Activated CD4-positive, alpha-beta memory T cell treated with anti-CD3 and anti-CD28 coated beads for 36 hours (primary cell): ENCODE measurements at regions of chr12 and their contacts with region 1.

Region 1: GRCh38 chr12:6937481-6938297 is 5.9 kb upstream of the RNU7-1 start:
- DNase-seq: peak; percentile 96
- H3K4me3 Mint-ChIP-seq: peak overlapping the region; percentile 76
- H3K27ac Mint-ChIP-seq: peak overlapping the region; percentile 94
- H3K4me1 Mint-ChIP-seq: peaks cover 44% of the 10 kb centered on the region
- H3K27me3 Mint-ChIP-seq: no peaks in the 10 kb centered on the region

Region 2: DNA sequence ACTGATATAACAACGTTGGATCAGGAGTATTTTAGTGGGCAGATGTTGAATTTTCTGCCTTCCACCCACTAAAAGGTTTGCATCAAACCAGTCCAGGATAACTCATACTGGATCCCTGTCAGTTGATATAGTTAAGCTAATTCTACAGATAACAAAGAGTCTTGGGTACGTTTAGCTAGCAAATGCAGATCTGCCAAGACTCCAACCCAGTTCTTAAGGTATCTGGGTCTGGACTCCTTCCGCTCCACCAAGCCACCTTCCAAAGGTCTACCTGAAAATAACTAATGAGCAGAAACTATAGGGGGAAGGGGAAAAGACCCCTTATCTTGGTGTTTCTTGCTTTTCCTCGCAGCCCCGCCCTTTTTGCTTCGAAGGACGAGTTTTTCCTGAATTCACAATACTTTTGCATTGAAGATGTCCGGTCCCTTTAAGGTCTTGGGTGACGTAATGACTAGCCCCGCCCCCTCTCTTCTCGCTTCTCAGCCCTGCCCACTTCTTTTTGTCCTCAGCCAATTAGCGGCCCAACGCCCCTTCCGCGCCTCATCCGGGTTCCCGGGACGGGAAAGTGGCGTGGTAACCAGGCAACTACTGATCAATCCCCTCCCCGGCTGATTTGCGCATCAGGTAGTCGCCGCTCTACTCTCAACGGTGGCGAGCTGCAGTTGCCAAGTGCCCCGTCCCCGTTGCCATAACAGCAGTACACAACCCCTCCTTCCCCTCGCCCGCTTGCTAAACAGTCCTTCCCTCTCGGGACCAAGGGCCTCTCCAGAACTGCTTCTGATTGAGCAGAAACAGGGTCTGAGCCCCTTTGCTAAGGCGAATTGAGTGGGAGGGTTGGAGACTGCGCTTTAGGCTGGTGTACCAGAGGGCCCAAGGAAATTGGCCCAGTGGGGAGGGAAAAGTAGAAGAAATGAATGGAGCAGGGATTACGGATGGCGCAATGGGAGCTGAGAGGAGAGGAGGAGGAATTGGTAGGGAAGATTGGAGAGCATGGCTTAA is 33.1 kb before region 1 on chr12 and contains the start of gene LRRC23:
- CTCF ChIA-PET with region 1: interaction called, 5 read pairs
- POLR2A ChIA-PET with region 1: interaction called, 5 read pairs
- intact Hi-C with region 1: loop called (anchors 2 kb)
- DNase-seq: peak; percentile 99
- H3K4me3 Mint-ChIP-seq: no peak within 1 kb of the TSS
- H3K27ac Mint-ChIP-seq: no peak within 1 kb of the TSS
- H3K4me1 Mint-ChIP-seq: peaks cover 5% of the 10 kb centered on the region
- H3K27me3 Mint-ChIP-seq: no peaks in the 10 kb centered on the region
- total RNA-seq, gene LRRC23: 6.8 to 7.8 TPM

Region 3: GRCh38 chr12:6921996-6922946 is 15.4 kb before region 1 on chr12:
- CTCF ChIA-PET with region 1: interaction called, 12 read pairs
- POLR2A ChIA-PET with region 1: interaction called, 33 read pairs
- intact Hi-C with region 1: loop called (anchors 1 kb)
- DNase-seq: no peak
- H3K4me3 Mint-ChIP-seq: no peak overlapping the region
- H3K27ac Mint-ChIP-seq: no peak overlapping the region
- H3K4me1 Mint-ChIP-seq: peaks cover 37% of the 10 kb centered on the region
- H3K27me3 Mint-ChIP-seq: no peaks in the 10 kb centered on the region

Region 4: DNA sequence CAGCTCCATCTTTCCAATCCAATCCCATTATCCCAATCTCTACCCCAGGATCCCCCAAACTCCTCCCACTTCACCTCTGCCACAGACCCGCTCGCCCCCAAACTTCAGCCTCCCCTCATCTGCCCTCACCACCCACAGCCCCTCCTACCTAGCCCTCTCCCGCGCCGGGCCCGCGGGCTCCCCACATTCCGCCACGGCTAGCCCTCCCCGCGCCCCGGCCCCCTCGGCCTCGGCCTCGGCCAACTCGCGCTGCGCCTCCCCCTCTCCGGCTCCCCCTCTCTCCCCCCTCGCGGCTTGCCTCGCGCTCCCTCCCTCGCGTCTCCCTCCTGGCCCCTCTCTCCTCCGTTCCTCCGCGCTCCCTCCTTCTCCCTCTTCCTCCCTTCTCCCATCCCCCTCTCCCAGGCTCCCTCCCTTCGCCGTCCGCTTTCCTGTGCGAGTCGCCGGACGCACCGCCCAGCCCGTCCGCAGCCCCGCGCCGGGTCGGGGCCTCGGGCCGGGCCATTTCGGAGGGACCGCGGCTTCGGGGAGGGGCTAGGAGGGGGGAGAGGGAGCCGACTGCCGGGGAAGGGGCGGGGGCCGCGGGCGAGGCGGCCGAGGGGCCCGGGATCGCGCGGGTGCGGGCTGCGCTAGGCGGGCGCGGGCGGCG is 10.2 kb before region 1 on chr12 and contains the start of gene ATN1:
- CTCF ChIA-PET with region 1: interaction called, 12 read pairs
- POLR2A ChIA-PET with region 1: interaction called, 33 read pairs
- intact Hi-C with region 1: loop called (anchors 1 kb)
- DNase-seq: peak; percentile 61
- H3K4me3 Mint-ChIP-seq: peak within 1 kb of the TSS; percentile 84
- H3K27ac Mint-ChIP-seq: peak within 1 kb of the TSS; percentile 89
- H3K4me1 Mint-ChIP-seq: peaks cover 64% of the 10 kb centered on the region
- H3K27me3 Mint-ChIP-seq: no peaks in the 10 kb centered on the region
- total RNA-seq, gene ATN1: 34.8 to 37.8 TPM

Region 5: DNA sequence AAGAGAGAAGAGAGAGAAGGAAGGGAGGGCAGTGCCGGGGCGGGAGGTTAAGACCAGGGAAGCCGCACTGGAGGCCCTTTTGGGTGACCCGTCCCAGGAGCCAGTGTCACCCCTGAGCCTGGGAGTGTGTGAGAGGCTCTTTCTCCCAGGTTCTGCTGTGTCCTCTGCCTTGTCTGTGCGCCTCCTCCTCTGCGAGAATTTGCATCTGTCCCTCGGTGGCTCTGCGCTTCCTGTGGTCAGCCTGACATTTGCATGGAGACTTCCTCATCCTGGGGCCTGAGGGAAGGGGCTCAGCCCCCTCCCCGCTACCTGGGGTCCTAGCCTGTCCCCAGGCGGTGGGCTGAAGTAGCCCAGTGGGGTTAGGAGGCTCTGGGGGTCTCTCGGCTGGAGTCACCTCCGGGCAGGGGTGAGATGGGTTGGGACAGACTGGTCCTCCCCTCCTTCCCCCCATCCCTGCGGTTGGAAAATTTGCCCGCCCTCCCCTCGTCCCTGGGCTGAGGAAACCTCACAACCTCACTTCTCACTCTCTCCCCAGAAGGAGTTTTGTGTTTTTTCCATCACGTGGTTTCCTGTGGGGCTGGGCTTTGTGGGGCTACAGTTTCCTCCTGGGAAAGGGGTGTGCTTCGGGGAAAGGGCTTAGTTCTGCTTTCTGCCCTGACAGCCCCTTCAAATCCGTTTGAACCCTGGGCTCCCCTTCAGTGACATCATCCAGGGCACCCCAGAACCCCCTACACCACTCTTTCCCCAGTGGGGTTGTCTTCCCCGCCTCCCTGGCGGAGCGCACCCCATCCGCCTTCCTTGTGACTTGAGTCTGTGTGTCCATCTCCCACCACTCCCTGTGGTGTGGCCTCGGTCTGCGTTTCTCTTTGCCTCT is 16.0 kb after region 1 on chr12:
- CTCF ChIA-PET with region 1: interaction called, 586 read pairs
- POLR2A ChIA-PET with region 1: interaction called, 507 read pairs
- intact Hi-C with region 1: no loop called
- DNase-seq: peak; percentile 91
- H3K4me3 Mint-ChIP-seq: peak overlapping the region; percentile 98
- H3K27ac Mint-ChIP-seq: peak overlapping the region; percentile 97
- H3K4me1 Mint-ChIP-seq: peaks cover 71% of the 10 kb centered on the region
- H3K27me3 Mint-ChIP-seq: no peaks in the 10 kb centered on the region